ENCODE measurements at regions of chr6 and their contacts with region 1.

Region 1: GRCh38 chr6:31739639-31740396 is at the start of gene MSH5:
- DNase-seq: peak; percentile 97
- H3K4me3 Mint-ChIP-seq: peak within 1 kb of the TSS; percentile 95
- H3K27ac Mint-ChIP-seq: peak within 1 kb of the TSS; percentile 90
- H3K4me1 Mint-ChIP-seq: peaks cover 49% of the 10 kb centered on the region
- H3K27me3 Mint-ChIP-seq: no peaks in the 10 kb centered on the region
- total RNA-seq, gene MSH5: 82.8 and 93.3 TPM in 2 replicates

Region 2: GRCh38 chr6:31619805-31620585 is 119.8 kb before region 1 on chr6:
- intact Hi-C with region 1: loop called (anchors 2 kb)
- DNase-seq: peak; percentile 98
- H3K4me3 Mint-ChIP-seq: peak overlapping the region; percentile 81
- H3K27ac Mint-ChIP-seq: peak overlapping the region; percentile 94
- H3K4me1 Mint-ChIP-seq: peaks cover 39% of the 10 kb centered on the region
- H3K27me3 Mint-ChIP-seq: no peaks in the 10 kb centered on the region

Region 3: GRCh38 chr6:31680840-31681671 is 58.8 kb before region 1 on chr6 and contains the start of gene LY6G5C:
- intact Hi-C with region 1: loop called (anchors 2 kb)
- DNase-seq: peak; percentile 58
- H3K4me3 Mint-ChIP-seq: peak within 1 kb of the TSS; percentile 73
- H3K27ac Mint-ChIP-seq: peak within 1 kb of the TSS; percentile 64
- H3K4me1 Mint-ChIP-seq: peaks cover 21% of the 10 kb centered on the region
- H3K27me3 Mint-ChIP-seq: no peaks in the 10 kb centered on the region
- total RNA-seq, gene LY6G5C: 4.6 and 4.8 TPM in 2 replicates

Region 4: GRCh38 chr6:31795616-31796298 is 55.9 kb after region 1 on chr6 and contains the start of gene VARS1:
- intact Hi-C with region 1: loop called (anchors 2 kb)
- DNase-seq: peak; percentile 81
- H3K4me3 Mint-ChIP-seq: peak within 1 kb of the TSS; percentile 93
- H3K27ac Mint-ChIP-seq: peak within 1 kb of the TSS; percentile 98
- H3K4me1 Mint-ChIP-seq: peaks cover 30% of the 10 kb centered on the region
- H3K27me3 Mint-ChIP-seq: no peaks in the 10 kb centered on the region
- total RNA-seq, gene VARS1: 166 and 176 TPM in 2 replicates

Region 5: GRCh38 chr6:31827286-31828079 is 87.7 kb after region 1 on chr6 and contains the start of gene HSPA1B:
- intact Hi-C with region 1: loop called (anchors 1 kb)
- DNase-seq: peak; percentile 96
- H3K4me3 Mint-ChIP-seq: peak within 1 kb of the TSS; percentile 85
- H3K27ac Mint-ChIP-seq: peak within 1 kb of the TSS; percentile 95
- H3K4me1 Mint-ChIP-seq: peaks cover 32% of the 10 kb centered on the region
- H3K27me3 Mint-ChIP-seq: no peaks in the 10 kb centered on the region
- total RNA-seq, gene HSPA1B: 116 and 120 TPM in 2 replicates

Measured in activated T-helper 2 cell treated with anti-CD3 and anti-CD28 coated beads, Interferon-gamma antibody, Interleukin-2, Interleukin-4, amounts not matched to agents 10 μg/mL and 5 μg/mL and 100 μg/mL, durations not matched to agents 14 hours and 24 hours and 36 hours (primary cell).